A549 (cell line): ENCODE measurements at regions of chr3 and their contacts with region 1.

Region 1: GRCh38 chr3:32177702-32178198 is 60.7 kb upstream of the CMTM8 start:
- DNase-seq: peak; percentile 67 to 91
- ATAC-seq: peak; percentile 96 to 98
- H3K4me3 ChIP-seq: no peak overlapping the region
- H3K27ac ChIP-seq: peak overlapping the region in 1 of 2 experiments; percentile 2; a peak in 1 of 6 replicates
- H3K4me1 ChIP-seq: peaks cover 5% of the 10 kb centered on the region; the same call in 1 of the 3 replicates
- CTCF ChIP-seq: peak; percentile 73
- EP300 ChIP-seq: no peak
- POLR2A ChIP-seq: no peak
- RAD21 ChIP-seq: peak; percentile 72 to 84; a peak in 4 of 5 replicates

Region 2: DNA sequence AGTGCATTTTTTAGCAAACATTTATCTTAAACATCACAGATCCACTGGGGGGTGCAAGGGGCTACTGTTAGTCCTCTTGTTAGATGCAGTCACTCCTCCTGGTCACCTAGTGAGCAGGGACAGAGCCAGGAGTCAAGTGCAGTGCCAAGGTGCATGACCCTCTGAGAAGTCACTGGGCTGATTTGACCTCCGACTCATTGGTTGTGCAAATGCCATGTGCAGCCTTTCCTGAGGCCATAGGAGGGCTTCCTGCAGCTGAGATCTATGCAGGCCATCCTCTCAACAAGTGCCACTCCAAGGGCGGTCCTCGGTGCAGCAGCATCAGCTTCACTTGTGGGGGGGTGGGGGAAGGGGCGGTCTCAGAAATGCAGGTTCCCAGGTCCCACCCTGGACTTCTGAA is 11.1 kb before region 1 on chr3:
- CTCF ChIA-PET with region 1: interaction called, 13 read pairs
- POLR2A ChIA-PET with region 1: no interaction called
- DNase-seq: no peak
- ATAC-seq: no peak
- H3K4me3 ChIP-seq: no peak overlapping the region
- H3K27ac ChIP-seq: no peak overlapping the region
- H3K4me1 ChIP-seq: no peaks in the 10 kb centered on the region
- CTCF ChIP-seq: no peak
- EP300 ChIP-seq: no peak
- POLR2A ChIP-seq: no peak
- RAD21 ChIP-seq: no peak

Region 3: DNA sequence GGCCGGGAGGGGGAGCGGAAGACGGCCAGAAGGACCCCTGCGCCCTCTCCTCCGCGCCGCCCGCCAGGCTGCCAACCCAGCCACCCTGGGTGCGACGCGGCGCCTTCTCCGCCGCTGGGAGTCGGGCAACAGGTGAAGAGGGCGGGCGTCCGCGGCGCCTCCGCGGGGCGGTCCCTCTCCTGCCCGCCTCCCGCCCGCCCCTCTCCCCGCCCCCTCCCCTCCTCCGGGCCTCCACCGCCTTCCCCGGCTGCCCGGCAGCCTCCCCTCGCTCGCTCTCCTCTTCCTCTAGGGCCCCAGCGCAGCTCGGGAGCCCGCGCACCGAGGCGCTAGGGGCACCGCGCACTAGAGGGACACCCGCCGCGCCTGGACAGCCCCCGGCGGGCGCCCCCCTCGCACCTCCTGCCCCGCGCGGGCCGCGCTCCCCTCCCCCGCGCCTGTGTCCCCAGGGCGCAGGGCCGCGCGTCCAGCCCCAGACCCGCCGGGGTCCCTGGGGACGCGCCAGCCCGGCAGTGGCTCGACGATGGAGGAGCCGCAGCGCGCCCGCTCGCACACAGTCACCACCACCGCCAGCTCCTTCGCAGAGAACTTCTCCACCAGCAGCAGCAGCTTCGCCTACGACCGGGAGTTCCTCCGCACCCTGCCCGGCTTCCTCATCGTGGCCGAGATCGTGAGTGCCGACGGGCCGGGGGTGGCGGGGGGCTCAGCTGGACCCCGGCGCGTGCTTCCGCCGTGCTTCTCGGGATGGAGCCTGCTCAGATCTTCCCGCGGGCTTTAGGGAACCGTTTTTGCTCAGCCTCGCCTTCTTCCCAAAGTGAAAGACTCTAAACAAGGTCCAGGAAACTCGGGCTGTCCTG is 60.9 kb after region 1 on chr3 and contains the start of gene CMTM8:
- CTCF ChIA-PET with region 1: interaction called, 32 read pairs
- POLR2A ChIA-PET with region 1: no interaction called
- DNase-seq: peak; percentile 60 to 69
- ATAC-seq: peak; percentile 87 to 89
- H3K4me3 ChIP-seq: peak within 1 kb of the TSS; percentile 96
- H3K27ac ChIP-seq: peak within 1 kb of the TSS; percentile 83 to 88
- H3K4me1 ChIP-seq: peaks cover 11% of the 10 kb centered on the region
- CTCF ChIP-seq: no peak
- EP300 ChIP-seq: no peak
- POLR2A ChIP-seq: peak; percentile 34; the same call in 1 of the 2 replicates
- RAD21 ChIP-seq: no peak
- polyA plus RNA-seq, gene CMTM8: 15.6 and 16.1 TPM in 2 replicates

Region 4: GRCh38 chr3:32296256-32297204 is 118.8 kb after region 1 on chr3:
- CTCF ChIA-PET with region 1: interaction called, 40 read pairs
- POLR2A ChIA-PET with region 1: no interaction called
- DNase-seq: peak; percentile 67 to 86
- ATAC-seq: peak; percentile 91 to 97
- H3K4me3 ChIP-seq: no peak overlapping the region
- H3K27ac ChIP-seq: peak overlapping the region in 1 of 2 experiments; percentile 14; a peak in 3 of 6 replicates
- H3K4me1 ChIP-seq: peaks cover 10% of the 10 kb centered on the region; the same call in 1 of the 3 replicates
- CTCF ChIP-seq: peak; percentile 89
- EP300 ChIP-seq: no peak
- POLR2A ChIP-seq: no peak
- RAD21 ChIP-seq: peak; percentile 74 to 76

Region 5: GRCh38 chr3:32401556-32402081 is 223.9 kb after region 1 on chr3:
- CTCF ChIA-PET with region 1: interaction called, 12 read pairs
- POLR2A ChIA-PET with region 1: no interaction called
- DNase-seq: peak; percentile 52 to 64
- ATAC-seq: peak; percentile 91 to 93
- H3K4me3 ChIP-seq: peak overlapping the region; percentile 42
- H3K27ac ChIP-seq: peak overlapping the region; percentile 92 to 97
- H3K4me1 ChIP-seq: peaks cover 14% of the 10 kb centered on the region; the same call in 2 of the 3 replicates
- CTCF ChIP-seq: no peak
- EP300 ChIP-seq: no peak
- POLR2A ChIP-seq: no peak; the same call in 1 of the 2 replicates
- RAD21 ChIP-seq: no peak